ENCODE measurements at regions of chr16 and their contacts with region 1.

Region 1: DNA sequence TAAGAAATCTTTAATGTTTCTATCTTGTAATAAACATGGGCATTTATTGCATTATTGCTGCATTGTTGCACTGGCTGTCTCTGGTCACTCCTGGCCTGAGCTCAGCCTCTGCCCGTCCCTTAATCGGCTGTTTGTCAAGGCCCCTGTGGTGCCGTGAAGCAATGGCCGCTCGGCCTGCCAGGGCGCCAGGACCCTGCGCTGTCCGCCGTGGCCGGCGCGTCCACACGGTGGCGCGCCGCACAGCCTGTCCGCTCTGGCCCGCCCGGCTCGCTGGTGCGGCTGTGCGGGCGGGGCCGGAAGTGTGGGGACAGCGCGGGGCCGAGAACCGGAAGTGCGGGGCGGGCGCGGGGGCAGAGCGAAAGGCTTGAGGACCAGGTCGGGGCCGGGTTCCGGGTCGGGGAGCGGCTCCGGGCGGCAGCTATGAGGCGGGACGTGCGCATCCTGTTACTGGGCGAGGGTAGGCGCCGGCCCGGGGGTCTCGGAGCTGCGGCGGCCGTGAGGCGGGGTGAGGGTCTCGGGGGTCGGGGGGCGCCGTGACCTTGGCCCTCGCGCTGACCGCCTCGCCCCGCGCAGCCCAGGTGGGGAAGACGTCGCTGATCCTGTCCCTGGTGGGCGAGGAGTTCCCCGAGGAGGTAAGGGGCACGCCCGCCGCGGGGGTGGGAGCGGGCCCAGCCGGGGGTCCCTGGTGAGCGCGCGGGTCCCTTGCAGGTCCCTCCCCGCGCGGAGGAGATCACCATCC is at the start of gene RHOT2:
- DNase-seq: peak; percentile 94
- H3K4me3 Mint-ChIP-seq: peak within 1 kb of the TSS; percentile 77
- H3K27ac Mint-ChIP-seq: peak within 1 kb of the TSS; percentile 78
- H3K4me1 Mint-ChIP-seq: peaks cover 12% of the 10 kb centered on the region
- H3K27me3 Mint-ChIP-seq: no peaks in the 10 kb centered on the region
- total RNA-seq, gene RHOT2: 140 to 141 TPM

Region 2: DNA sequence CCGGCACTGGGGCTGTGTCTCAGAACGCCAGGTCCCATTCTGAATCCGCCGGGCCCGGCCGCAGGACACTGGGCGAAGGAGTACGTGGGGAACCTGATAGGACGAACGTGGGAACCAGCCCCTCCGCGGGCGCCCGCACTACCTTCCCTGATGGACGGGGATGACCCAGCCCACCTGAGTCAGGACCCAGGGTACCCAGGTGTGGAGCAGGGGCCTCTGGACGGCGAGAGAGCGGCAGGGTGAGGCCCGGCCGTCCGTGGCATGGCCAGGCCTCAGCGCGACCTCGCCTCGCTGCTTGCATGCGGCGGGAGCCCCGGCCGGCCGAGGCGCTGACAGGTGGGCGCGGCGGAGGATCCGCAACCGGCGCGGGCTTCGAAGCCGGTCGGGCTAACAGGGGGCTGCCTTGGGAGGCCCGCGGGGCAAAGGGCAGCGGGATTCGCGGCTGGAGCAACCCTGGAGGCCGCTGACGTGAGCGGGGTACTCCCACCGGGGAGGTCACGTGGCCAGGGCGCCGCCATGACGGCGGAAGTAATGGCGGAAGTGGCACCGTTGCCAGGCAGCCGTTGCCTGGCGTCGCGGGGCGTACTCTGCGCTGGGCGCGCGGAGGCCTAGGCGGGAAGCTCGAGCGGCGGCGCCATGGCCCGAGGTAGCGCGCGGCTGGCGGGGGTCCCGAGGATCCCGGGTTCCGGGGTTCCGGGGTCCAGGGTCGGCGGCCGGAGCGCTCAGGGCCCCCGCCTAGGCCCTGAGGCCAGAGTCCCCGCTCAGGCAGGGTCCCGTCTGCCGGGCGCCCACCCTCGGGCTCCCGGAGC is 19.0 kb before region 1 on chr16 and contains the start of gene WDR90:
- CTCF ChIA-PET with region 1: interaction called, 3 read pairs
- POLR2A ChIA-PET with region 1: interaction called, 12 read pairs
- DNase-seq: peak; percentile 95
- H3K4me3 Mint-ChIP-seq: peak within 1 kb of the TSS; percentile 75
- H3K27ac Mint-ChIP-seq: peak within 1 kb of the TSS; percentile 64
- H3K4me1 Mint-ChIP-seq: peaks cover 28% of the 10 kb centered on the region
- H3K27me3 Mint-ChIP-seq: no peaks in the 10 kb centered on the region
- total RNA-seq, gene WDR90: 58.0 to 58.4 TPM

Region 3: GRCh38 chr16:684067-684794 is 16.3 kb after region 1 on chr16 and contains the start of gene JMJD8:
- CTCF ChIA-PET with region 1: interaction called, 8 read pairs
- POLR2A ChIA-PET with region 1: interaction called, 25 read pairs
- DNase-seq: peak; percentile 97
- H3K4me3 Mint-ChIP-seq: peak within 1 kb of the TSS; percentile 81
- H3K27ac Mint-ChIP-seq: peak within 1 kb of the TSS; percentile 64
- H3K4me1 Mint-ChIP-seq: peaks cover 49% of the 10 kb centered on the region
- H3K27me3 Mint-ChIP-seq: no peaks in the 10 kb centered on the region
- total RNA-seq, gene JMJD8: 27.1 to 27.2 TPM

Region 4: GRCh38 chr16:689175-689901 is 21.4 kb after region 1 on chr16:
- CTCF ChIA-PET with region 1: interaction called, 3 read pairs
- POLR2A ChIA-PET with region 1: interaction called, 11 read pairs
- DNase-seq: no peak
- H3K4me3 Mint-ChIP-seq: peak overlapping the region; percentile 84
- H3K27ac Mint-ChIP-seq: peak overlapping the region; percentile 85
- H3K4me1 Mint-ChIP-seq: peaks cover 37% of the 10 kb centered on the region
- H3K27me3 Mint-ChIP-seq: no peaks in the 10 kb centered on the region

Measured in activated CD4-positive, alpha-beta memory T cell treated with anti-CD3 and anti-CD28 coated beads, Interleukin-2, amount 10 ng/mL, durations not matched to agents 7 days and 5 days (primary cell).